Activated T-helper 2 cell treated with anti-CD3 and anti-CD28 coated beads, Interferon-gamma antibody, Interleukin-2, Interleukin-4, amounts not matched to agents 10 μg/mL and 5 μg/mL and 100 μg/mL, durations not matched to agents 14 hours and 24 hours and 36 hours (primary cell): ENCODE measurements at regions of chr19 and their contacts with region 1.

Region 1: GRCh38 chr19:33778089-33778791 is 18.4 kb upstream of the KCTD15 start:
- DNase-seq: peak; percentile 78
- H3K4me3 Mint-ChIP-seq: no peak overlapping the region
- H3K27ac Mint-ChIP-seq: no peak overlapping the region
- H3K4me1 Mint-ChIP-seq: peaks cover 3% of the 10 kb centered on the region
- H3K27me3 Mint-ChIP-seq: peaks cover 10% of the 10 kb centered on the region

Region 2: DNA sequence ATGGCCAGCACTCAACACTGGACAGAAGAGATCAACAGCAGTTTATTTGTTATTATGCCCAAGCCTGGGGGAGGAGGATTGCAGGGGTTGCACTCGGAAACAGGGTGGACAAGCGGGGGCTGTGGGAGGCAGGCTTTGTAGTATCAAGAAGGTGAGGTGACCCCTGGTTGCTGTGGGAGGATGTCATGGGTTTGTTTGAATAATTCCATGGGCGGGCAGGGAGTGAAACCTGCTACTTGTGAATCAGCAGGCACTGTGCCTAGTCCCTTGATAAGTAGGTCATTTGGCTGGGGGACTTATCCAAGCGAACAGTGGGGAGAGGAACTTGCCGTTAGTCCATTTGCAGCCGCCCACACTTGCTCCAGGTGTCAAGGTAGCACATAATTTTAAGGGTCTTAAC is 66.0 kb before region 1 on chr19:
- intact Hi-C with region 1: no loop called
- DNase-seq: no peak
- H3K4me3 Mint-ChIP-seq: no peak overlapping the region
- H3K27ac Mint-ChIP-seq: no peak overlapping the region
- H3K4me1 Mint-ChIP-seq: no peaks in the 10 kb centered on the region
- H3K27me3 Mint-ChIP-seq: no peaks in the 10 kb centered on the region

Region 3: DNA sequence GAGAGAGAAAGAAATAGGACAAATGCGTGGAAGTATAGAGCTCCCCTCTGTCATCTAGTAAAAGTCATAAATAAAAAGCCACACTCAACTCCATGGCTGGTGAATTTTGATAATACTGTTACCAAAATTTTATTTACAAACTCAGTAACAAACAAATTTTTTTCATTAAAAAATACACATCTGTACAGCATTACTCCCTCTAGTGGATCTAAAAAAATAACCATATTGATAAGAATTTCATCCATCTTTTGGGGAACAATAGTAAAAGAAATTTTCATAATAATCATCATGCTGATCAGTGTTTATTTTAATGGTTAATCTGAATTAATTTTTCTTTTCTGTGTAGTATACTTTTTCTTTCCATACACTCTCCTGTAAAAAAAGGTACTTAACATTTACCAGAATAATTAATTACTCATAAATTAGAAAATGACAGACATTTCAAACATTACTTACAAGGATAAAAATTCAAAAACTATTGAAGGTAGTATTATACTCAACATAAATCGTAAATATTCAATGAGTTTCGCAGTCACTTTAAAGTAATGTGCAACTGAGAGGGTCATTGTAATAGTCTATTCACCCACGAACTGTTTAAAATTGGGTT is 220.6 kb after region 1 on chr19:
- intact Hi-C with region 1: loop called (anchors 2 kb)
- DNase-seq: no peak
- H3K4me3 Mint-ChIP-seq: no peak overlapping the region
- H3K27ac Mint-ChIP-seq: no peak overlapping the region
- H3K4me1 Mint-ChIP-seq: no peaks in the 10 kb centered on the region
- H3K27me3 Mint-ChIP-seq: peaks cover 2% of the 10 kb centered on the region

Region 4: DNA sequence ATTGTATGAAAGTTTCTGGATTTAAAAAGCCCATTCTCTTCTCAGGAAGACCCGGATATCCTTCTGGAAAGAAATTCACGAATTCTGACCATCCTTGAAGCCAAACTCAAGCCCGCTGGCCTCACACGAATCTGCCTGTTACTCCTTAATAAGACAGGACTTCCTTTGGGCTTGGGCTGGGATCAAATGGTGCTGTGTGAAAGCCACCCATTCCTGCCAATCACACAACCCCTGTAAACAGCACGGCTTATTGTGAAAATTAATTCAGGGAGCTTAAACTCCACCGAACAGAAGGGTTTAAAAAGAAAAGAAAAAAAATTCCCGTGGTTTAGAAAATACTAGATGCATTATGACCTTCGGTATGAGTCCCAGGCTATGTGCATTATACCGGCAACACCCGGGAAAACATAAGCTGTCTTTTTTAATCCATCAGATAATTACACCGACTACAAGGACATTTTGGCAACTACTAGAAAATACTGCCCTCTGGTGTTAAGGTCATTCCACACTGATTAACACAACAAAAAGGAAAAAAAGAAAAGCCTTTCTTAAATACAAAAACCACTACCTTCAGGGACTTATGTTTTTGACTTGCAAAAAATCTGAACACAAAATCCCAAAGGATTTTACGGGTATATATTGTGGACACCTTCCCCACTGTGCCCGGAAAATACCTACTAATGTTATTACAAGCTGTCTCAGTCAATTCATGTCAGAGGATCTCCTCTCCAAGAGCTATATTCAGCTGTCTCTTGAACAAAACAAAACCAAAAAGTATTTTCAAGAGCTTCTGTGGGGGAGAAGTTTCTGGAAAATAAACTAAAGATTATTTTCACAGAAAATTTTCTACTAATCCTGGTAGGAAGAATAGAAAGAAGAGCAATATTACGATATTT is 318.0 kb after region 1 on chr19:
- intact Hi-C with region 1: loop called (anchors 5 kb)
- DNase-seq: no peak
- H3K4me3 Mint-ChIP-seq: no peak overlapping the region
- H3K27ac Mint-ChIP-seq: no peak overlapping the region
- H3K4me1 Mint-ChIP-seq: no peaks in the 10 kb centered on the region
- H3K27me3 Mint-ChIP-seq: peaks cover 14% of the 10 kb centered on the region

Region 5: GRCh38 chr19:34145741-34146202 is 367.5 kb after region 1 on chr19:
- intact Hi-C with region 1: loop called (anchors 5 kb)
- DNase-seq: peak; percentile 39
- H3K4me3 Mint-ChIP-seq: no peak overlapping the region
- H3K27ac Mint-ChIP-seq: no peak overlapping the region
- H3K4me1 Mint-ChIP-seq: no peaks in the 10 kb centered on the region
- H3K27me3 Mint-ChIP-seq: peaks cover 3% of the 10 kb centered on the region